H1 (cell line): ENCODE measurements at regions of chr9 and their contacts with region 1.

Region 1: GRCh38 chr9:93860694-93861658 is 94.2 kb downstream of the BARX1 start:
- DNase-seq: no peak
- H3K4me3 ChIP-seq: no peak overlapping the region
- H3K27ac ChIP-seq: no peak overlapping the region
- H3K4me1 ChIP-seq: peaks cover 2 to 8% (median 4%) of the 10 kb centered on the region in 4 experiments; a peak in 5 of 7 replicates
- H3K27me3 ChIP-seq: no peaks in the 10 kb centered on the region; a peak in 2 of 7 replicates
- CTCF ChIP-seq: peak in 1 of 3 experiments; percentile 20; a peak in 1 of 4 replicates
- EP300 ChIP-seq: no peak
- POLR2A ChIP-seq: no peak
- RAD21 ChIP-seq: no peak; a peak in 1 of 4 replicates

Region 2: DNA sequence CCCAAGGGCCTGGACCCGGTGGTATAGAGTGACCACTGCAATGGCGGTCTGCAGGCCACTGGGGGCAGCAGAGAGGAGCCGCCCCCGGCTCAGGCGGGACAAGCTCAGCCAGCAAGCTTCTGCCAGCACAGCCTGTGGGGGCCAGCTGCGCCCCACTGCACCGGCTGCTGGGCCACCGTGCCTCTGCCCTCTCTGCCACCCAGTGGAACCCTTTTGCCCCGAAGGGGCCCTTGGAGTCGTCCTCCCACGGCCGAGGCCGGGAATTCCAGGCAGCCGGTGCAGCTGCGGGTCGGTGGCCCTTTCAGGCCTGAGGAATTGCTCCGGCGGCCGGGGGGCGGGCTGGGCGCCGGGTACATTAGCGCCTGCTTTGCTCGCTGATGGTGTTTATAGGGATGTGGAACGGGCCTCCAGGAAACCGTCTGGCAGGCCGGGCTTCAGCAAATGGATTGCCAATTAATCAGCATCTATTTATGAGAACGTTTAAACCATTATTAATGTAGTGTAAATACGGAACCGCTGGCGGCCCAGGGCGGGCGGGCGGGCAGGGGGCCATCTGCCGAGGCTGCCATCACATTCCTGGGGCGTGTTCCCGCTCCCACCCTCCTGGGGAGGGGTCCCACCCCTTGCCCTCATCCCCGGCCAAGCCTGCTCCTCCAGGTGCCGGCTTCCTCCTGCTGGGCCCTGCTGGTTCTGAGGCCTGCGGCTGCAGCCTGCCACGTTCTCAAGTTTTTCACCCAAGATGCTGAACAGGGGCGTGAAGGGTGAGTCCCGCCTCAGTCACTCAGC is 33.2 kb before region 1 on chr9:
- CTCF ChIA-PET with region 1: interaction called, 35 read pairs
- POLR2A ChIA-PET with region 1: interaction called, 3 read pairs
- DNase-seq: peak in 1 of 2 experiments; percentile 89
- H3K4me3 ChIP-seq: peak overlapping the region in 3 of 4 experiments; percentile 12 to 55 (median 19); a peak in 4 of 8 replicates
- H3K27ac ChIP-seq: no peak overlapping the region
- H3K4me1 ChIP-seq: peaks cover 4 to 15% (median 11%) of the 10 kb centered on the region in 4 experiments; a peak in 6 of 7 replicates
- H3K27me3 ChIP-seq: peaks cover 0 to 9% (median 5%) of the 10 kb centered on the region in 4 experiments; a peak in 3 of 7 replicates
- CTCF ChIP-seq: peak in 2 of 3 experiments; percentile 86 to 92; a peak in 3 of 4 replicates
- EP300 ChIP-seq: no peak
- POLR2A ChIP-seq: no peak
- RAD21 ChIP-seq: peak; percentile 57 to 70

Region 3: DNA sequence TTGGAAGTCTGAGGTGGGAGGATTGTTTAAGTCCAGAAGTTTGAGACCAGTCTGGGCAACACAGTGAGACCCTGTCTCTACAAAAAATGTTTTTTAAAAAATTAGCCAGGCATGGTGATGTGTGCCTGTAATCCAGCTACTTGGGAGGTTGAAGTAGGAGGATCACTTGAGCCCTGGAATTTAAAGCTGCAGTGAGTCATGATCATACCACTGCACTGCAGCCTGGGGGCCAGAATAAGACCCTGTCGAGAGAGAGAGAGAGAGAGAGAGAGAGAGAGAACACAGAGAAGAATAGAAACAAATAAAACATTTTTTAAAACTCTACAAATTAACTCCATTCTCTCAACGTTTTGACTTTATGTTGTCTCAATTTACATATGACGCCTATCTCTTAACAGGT is 17.6 kb before region 1 on chr9:
- CTCF ChIA-PET with region 1: interaction called, 30 read pairs
- POLR2A ChIA-PET with region 1: no interaction called
- DNase-seq: no peak
- H3K4me3 ChIP-seq: no peak overlapping the region
- H3K27ac ChIP-seq: no peak overlapping the region
- H3K4me1 ChIP-seq: no peaks in the 10 kb centered on the region
- H3K27me3 ChIP-seq: no peaks in the 10 kb centered on the region
- CTCF ChIP-seq: no peak
- EP300 ChIP-seq: no peak
- POLR2A ChIP-seq: no peak
- RAD21 ChIP-seq: no peak

Region 4: GRCh38 chr9:93884845-93885244 is 23.9 kb after region 1 on chr9:
- CTCF ChIA-PET with region 1: interaction called, 14 read pairs
- POLR2A ChIA-PET with region 1: no interaction called
- DNase-seq: no peak
- H3K4me3 ChIP-seq: no peak overlapping the region
- H3K27ac ChIP-seq: no peak overlapping the region
- H3K4me1 ChIP-seq: no peaks in the 10 kb centered on the region
- H3K27me3 ChIP-seq: no peaks in the 10 kb centered on the region
- CTCF ChIP-seq: no peak
- EP300 ChIP-seq: no peak
- POLR2A ChIP-seq: no peak
- RAD21 ChIP-seq: no peak

Region 5: GRCh38 chr9:94178927-94179326 is 318.0 kb after region 1 on chr9:
- CTCF ChIA-PET with region 1: no interaction called
- POLR2A ChIA-PET with region 1: no interaction called
- DNase-seq: no peak
- H3K4me3 ChIP-seq: no peak overlapping the region
- H3K27ac ChIP-seq: no peak overlapping the region
- H3K4me1 ChIP-seq: peaks cover 0 to 6% (median 0%) of the 10 kb centered on the region in 4 experiments; a peak in 2 of 7 replicates
- H3K27me3 ChIP-seq: no peaks in the 10 kb centered on the region
- CTCF ChIP-seq: no peak
- EP300 ChIP-seq: no peak
- POLR2A ChIP-seq: no peak
- RAD21 ChIP-seq: no peak